Activated CD4-positive, alpha-beta T cell treated with anti-CD3 and anti-CD28 coated beads for 36 hours (primary cell): ENCODE measurements at regions of chr7 and their contacts with region 1.

Region 1: DNA sequence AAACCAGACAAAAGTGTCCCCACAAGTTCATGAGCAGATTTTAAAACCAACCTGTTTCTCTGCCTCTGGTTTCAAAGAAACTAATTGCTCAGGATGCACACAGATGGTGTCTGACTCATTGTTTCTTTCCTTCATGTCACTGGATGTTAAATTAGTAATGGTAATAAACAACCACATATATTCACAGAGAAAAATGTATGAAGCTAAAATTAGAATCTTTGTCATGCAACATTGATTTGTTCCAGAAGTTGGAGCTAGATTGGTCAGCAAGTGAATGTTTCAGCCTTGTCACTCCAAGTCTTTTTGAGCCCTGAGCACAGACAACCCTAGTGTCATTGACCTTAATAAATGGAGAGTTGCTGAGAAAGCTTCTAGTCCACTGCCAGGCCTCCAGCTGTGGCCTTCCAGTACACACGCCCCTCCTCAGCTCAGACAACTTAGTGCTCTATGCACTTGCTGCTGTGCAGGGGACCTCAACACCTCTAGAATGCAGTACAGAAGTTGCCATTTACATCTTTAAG is 175.9 kb downstream of the CCDC71L start:
- DNase-seq: no peak
- ATAC-seq: peak; percentile 73
- H3K4me3 Mint-ChIP-seq: no peak overlapping the region
- H3K27ac Mint-ChIP-seq: peak overlapping the region; percentile 80
- H3K4me1 Mint-ChIP-seq: peaks cover 60% of the 10 kb centered on the region
- H3K27me3 Mint-ChIP-seq: peaks cover 10% of the 10 kb centered on the region

Region 2: DNA sequence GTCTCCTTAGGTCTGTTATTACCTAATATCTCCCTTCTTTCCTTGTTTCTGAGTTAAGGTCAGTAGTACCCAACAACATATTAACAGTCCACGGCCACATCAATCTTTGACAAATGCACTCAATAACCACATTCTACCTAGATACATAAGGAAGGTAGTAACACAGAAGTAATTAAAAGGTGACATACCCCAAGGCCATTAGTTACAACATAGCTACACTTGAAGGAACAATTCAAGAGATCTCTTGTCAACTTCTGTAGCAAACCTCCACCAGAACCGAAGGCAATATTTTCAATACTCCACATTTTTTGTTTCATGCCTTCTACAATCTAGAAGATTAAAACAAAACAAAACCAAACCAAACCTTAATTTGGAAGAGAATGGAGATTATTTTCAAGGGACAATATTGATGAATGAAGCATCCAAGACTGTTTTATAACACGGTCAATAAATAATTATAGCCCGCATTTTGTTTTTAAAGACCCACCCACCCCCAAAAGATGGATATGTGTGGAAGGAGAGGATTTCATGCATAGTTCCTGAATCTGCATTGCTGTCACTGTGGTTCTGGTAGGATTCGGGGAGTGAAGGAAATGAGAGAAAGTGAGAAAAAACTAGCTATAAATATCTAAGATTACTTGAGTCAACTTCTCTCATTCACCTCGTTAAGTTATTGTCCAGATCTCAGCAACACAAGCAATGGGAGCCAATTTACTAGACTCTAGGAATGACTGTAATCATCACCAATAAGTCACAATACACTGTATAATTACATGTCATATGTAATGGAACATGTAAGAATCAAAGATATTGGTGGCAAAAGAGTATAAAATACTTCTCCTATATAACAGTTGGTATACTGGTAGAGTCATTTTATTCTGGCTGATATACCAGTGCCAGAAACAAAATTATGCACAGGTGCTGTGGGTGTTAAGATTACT is 230.6 kb before region 1 on chr7:
- CTCF ChIA-PET with region 1: interaction called, 3 read pairs
- POLR2A ChIA-PET with region 1: no interaction called
- intact Hi-C with region 1: loop called in 1 of 2 experiments (anchors 1 kb)
- DNase-seq: no peak
- ATAC-seq: peak; percentile 28
- H3K4me3 Mint-ChIP-seq: no peak overlapping the region
- H3K27ac Mint-ChIP-seq: peak overlapping the region; percentile 11
- H3K4me1 Mint-ChIP-seq: peaks cover 52% of the 10 kb centered on the region
- H3K27me3 Mint-ChIP-seq: no peaks in the 10 kb centered on the region

Region 3: DNA sequence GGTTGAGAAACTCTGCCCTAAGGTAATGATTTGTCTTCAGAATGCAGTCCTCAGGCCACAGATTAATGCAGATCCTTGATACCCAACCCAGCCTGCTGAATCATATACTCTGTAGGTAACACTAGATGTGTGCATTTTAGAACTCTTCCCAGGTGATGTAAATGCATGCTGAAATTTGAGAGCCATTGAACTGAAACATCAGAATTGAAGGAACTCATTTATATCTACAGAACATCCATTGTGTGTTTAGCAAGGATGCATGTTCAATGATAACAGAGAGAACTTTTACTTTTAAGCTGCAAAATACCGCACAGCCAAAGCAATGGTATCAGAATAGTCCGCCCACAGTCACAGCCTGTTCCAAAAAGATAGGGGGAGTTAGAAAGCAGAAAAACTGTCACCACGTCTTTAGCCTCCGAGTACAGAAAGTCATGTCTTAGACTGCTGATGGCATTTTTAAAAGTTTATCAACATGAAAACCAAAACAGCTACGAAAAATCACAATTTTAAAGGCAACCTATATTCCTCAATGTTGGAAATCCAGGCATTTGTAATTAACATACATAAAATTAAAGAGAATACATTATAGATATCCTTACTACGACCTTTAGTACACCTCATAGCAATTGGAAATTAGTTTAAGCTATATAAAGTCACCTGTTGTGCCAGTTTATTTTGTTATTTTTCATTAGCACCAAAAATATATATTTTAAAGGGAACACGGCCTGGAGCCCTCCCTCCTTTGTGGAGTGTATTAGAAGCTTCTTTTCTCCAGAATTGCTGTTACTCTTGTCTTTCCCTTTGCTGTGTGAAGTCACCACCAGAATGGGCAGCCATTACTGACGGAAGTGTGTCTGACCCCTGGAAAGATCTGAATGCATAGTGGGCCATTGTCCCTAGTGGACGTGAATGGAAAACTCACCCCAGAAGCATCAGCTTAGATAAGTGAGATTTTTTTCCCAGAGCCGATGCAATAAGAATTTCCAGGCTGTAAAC is 493.6 kb after region 1 on chr7:
- CTCF ChIA-PET with region 1: no interaction called
- POLR2A ChIA-PET with region 1: no interaction called
- intact Hi-C with region 1: no loop called
- DNase-seq: no peak
- ATAC-seq: no peak
- H3K4me3 Mint-ChIP-seq: no peak overlapping the region
- H3K27ac Mint-ChIP-seq: no peak overlapping the region
- H3K4me1 Mint-ChIP-seq: no peaks in the 10 kb centered on the region
- H3K27me3 Mint-ChIP-seq: no peaks in the 10 kb centered on the region